ENCODE measurements at regions of chr16 and their contacts with region 1.

Region 1: GRCh38 chr16:63613701-63614100 is 1508.2 kb downstream of the CDH11 start:
- DNase-seq: peak; percentile 53
- H3K4me3 Mint-ChIP-seq: no peak overlapping the region
- H3K27ac Mint-ChIP-seq: peak overlapping the region; percentile 12
- H3K4me1 Mint-ChIP-seq: peaks cover 12% of the 10 kb centered on the region
- H3K27me3 Mint-ChIP-seq: no peaks in the 10 kb centered on the region
- CTCF ChIP-seq: no peak

Region 2: GRCh38 chr16:63426275-63426870 is 187.3 kb before region 1 on chr16:
- CTCF ChIA-PET with region 1: no interaction called
- POLR2A ChIA-PET with region 1: no interaction called
- intact Hi-C with region 1: no loop called
- DNase-seq: no peak
- H3K4me3 Mint-ChIP-seq: no peak overlapping the region
- H3K27ac Mint-ChIP-seq: no peak overlapping the region
- H3K4me1 Mint-ChIP-seq: peaks cover 6% of the 10 kb centered on the region
- H3K27me3 Mint-ChIP-seq: no peaks in the 10 kb centered on the region
- CTCF ChIP-seq: no peak

Region 3: GRCh38 chr16:63655846-63656245 is 42.1 kb after region 1 on chr16:
- CTCF ChIA-PET with region 1: no interaction called
- POLR2A ChIA-PET with region 1: no interaction called
- intact Hi-C with region 1: loop called (anchors 5 kb)
- DNase-seq: peak; percentile 8
- H3K4me3 Mint-ChIP-seq: no peak overlapping the region
- H3K27ac Mint-ChIP-seq: no peak overlapping the region
- H3K4me1 Mint-ChIP-seq: no peaks in the 10 kb centered on the region
- H3K27me3 Mint-ChIP-seq: no peaks in the 10 kb centered on the region
- CTCF ChIP-seq: no peak